Activated CD4-positive, alpha-beta T cell treated with anti-CD3 and anti-CD28 coated beads, Interleukin-2, amount 10 ng/mL, durations not matched to agents 24 days and 14 days (primary cell): ENCODE measurements at regions of chr5 and their contacts with region 1.

Region 1: GRCh38 chr5:179732417-179732917 is at the start of gene MAML1:
- DNase-seq: peak; percentile 100
- H3K4me3 Mint-ChIP-seq: peak within 1 kb of the TSS; percentile 96
- H3K27ac Mint-ChIP-seq: peak within 1 kb of the TSS; percentile 91
- H3K4me1 Mint-ChIP-seq: peaks cover 31% of the 10 kb centered on the region
- H3K27me3 Mint-ChIP-seq: no peaks in the 10 kb centered on the region
- total RNA-seq, gene MAML1: 34.6 and 37.3 TPM in 2 replicates

Region 2: GRCh38 chr5:178404987-178405386 is 1327.5 kb before region 1 on chr5:
- intact Hi-C with region 1: no loop called
- DNase-seq: no peak
- H3K4me3 Mint-ChIP-seq: no peak overlapping the region
- H3K27ac Mint-ChIP-seq: no peak overlapping the region
- H3K4me1 Mint-ChIP-seq: no peaks in the 10 kb centered on the region
- H3K27me3 Mint-ChIP-seq: no peaks in the 10 kb centered on the region

Region 3: DNA sequence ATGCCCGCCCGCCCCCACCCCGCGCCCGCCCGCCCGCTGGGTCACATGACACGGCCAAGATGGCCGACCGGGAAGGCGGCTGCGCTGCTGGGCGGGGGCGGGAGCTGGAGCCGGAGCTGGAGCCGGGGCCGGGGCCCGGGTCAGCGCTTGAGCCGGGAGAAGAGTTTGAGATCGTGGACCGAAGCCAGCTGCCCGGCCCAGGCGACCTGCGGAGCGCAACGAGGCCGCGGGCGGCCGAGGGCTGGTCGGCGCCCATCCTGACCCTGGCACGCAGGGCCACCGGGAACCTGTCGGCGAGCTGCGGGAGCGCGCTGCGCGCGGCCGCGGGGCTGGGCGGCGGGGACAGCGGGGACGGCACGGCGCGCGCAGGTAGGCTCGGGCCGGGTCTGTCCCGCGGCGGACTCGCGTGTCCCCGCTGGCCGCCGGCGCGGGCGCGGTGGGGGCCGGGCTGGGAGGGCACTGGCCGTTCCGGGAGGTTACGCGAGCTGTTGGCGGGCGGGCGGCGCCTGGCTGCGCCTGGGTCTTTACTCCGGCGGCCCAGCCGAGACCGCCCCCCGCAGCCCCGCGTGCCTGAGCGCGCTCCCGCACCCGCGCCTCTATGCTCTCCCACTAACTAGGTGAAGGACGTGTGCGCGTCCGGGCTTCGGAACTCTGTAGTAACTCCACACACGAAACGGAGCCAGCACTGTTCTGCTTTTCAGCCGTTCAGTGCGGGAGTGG is 181.8 kb before region 1 on chr5 and contains the start of gene RUFY1:
- intact Hi-C with region 1: loop called (anchors 2 kb)
- DNase-seq: peak; percentile 96
- H3K4me3 Mint-ChIP-seq: peak within 1 kb of the TSS; percentile 97
- H3K27ac Mint-ChIP-seq: peak within 1 kb of the TSS; percentile 99
- H3K4me1 Mint-ChIP-seq: peaks cover 23% of the 10 kb centered on the region
- H3K27me3 Mint-ChIP-seq: peaks cover 2% of the 10 kb centered on the region
- total RNA-seq, gene RUFY1: 38.8 and 40.6 TPM in 2 replicates

Region 4: GRCh38 chr5:179608131-179608581 is 124.3 kb before region 1 on chr5:
- intact Hi-C with region 1: no loop called
- DNase-seq: peak; percentile 91
- H3K4me3 Mint-ChIP-seq: peak overlapping the region; percentile 30
- H3K27ac Mint-ChIP-seq: peak overlapping the region; percentile 77
- H3K4me1 Mint-ChIP-seq: peaks cover 39% of the 10 kb centered on the region
- H3K27me3 Mint-ChIP-seq: no peaks in the 10 kb centered on the region

Region 5: GRCh38 chr5:179678223-179679013 is 54.0 kb before region 1 on chr5:
- intact Hi-C with region 1: loop called (anchors 1 kb)
- DNase-seq: peak; percentile 98
- H3K4me3 Mint-ChIP-seq: peak overlapping the region; percentile 100
- H3K27ac Mint-ChIP-seq: peak overlapping the region; percentile 99
- H3K4me1 Mint-ChIP-seq: peaks cover 31% of the 10 kb centered on the region
- H3K27me3 Mint-ChIP-seq: no peaks in the 10 kb centered on the region

Region 6: GRCh38 chr5:179697993-179698934 is 34.2 kb before region 1 on chr5:
- intact Hi-C with region 1: loop called (anchors 1 kb)
- DNase-seq: peak; percentile 100
- H3K4me3 Mint-ChIP-seq: peak overlapping the region; percentile 89
- H3K27ac Mint-ChIP-seq: peak overlapping the region; percentile 99
- H3K4me1 Mint-ChIP-seq: peaks cover 27% of the 10 kb centered on the region
- H3K27me3 Mint-ChIP-seq: no peaks in the 10 kb centered on the region

Region 7: GRCh38 chr5:179763215-179763945 is 30.9 kb after region 1 on chr5:
- intact Hi-C with region 1: loop called (anchors 2 kb)
- DNase-seq: peak; percentile 83
- H3K4me3 Mint-ChIP-seq: no peak overlapping the region
- H3K27ac Mint-ChIP-seq: no peak overlapping the region
- H3K4me1 Mint-ChIP-seq: peaks cover 47% of the 10 kb centered on the region
- H3K27me3 Mint-ChIP-seq: no peaks in the 10 kb centered on the region

Region 8: DNA sequence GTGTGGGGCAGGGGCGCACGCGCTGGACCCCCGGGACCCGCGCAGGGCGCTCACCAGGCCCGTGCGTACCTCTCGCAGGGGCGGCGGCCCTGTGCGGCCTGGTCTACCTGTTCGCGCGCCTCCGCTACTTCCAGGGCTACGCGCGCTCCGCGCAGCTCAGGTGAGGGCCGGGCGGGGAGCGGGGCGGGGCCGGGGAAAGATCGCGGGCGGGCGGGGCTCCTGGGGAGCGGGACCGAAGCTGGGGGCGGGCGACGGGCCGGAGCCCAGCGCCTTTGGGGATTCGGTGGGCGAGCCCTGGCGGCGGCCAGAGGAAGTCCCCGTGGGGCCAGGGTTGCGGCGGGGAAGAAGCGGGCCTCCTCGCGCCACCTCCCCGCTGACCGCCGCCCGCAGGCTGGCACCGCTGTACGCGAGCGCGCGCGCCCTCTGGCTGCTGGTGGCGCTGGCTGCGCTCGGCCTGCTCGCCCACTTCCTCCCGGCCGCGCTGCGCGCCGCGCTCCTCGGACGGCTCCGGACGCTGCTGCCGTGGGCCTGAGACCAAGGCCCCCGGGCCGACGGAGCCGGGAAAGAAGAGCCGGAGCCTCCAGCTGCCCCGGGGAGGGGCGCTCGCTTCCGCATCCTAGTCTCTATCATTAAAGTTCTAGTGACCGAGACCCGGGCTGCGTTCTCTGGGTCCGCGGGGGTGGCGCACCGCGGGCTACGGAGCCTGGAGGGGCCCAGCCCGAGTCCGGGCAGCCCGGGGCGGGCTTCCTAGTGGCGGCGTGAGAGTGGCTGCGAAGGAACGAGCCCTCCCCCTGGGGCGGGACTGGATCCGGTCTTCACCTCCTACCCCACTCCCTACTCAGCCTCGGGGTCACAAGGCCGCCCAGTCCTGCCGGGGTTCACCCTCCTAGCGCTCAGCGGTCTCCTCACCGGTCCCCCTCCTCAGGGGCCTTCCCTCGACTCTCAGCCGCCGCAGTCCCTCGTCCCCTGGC is 63.7 kb after region 1 on chr5:
- intact Hi-C with region 1: loop called (anchors 2 kb)
- DNase-seq: peak; percentile 92
- H3K4me3 Mint-ChIP-seq: peak overlapping the region; percentile 73
- H3K27ac Mint-ChIP-seq: peak overlapping the region; percentile 71
- H3K4me1 Mint-ChIP-seq: peaks cover 14% of the 10 kb centered on the region
- H3K27me3 Mint-ChIP-seq: no peaks in the 10 kb centered on the region

Region 9: DNA sequence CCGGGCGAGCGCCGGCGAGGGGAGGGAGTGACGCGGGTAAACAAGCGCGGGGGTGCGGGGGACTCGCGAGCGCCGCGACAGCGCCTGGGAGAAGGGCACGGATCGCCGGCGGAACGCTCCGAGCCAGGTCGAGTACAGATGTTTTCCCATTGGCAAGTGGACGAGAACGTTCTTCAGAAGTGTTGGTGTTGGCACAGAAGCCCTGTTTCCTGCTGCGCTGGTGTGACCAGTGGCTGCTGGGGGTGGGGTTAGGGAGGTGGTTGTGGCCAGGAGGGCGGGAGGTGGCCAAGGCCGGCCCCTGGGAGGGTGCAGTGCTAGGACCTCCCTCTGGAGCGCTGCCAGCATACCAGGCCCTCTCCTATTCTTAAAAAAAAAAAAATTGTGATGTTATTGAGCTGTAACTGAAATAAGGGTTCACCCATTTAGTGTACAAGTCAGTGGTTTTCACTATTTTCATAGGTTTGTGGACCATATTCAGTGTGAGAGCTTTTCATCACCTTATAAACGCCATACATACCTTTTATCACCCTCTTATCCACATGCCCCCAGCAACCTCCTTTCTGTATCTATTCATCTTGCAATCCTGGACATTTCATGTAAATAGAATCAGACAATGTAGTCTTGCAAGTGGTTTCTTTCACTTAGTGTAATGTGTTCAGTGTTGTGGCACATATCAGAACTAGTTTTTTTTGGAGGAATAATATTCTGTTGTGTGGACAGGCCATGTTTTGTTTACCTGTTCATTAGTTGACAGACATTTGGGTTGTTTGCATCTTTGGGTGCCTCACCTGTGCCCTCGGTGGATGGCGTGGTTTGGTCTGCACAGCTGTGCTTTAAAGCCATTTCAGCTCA is 89.3 kb after region 1 on chr5:
- intact Hi-C with region 1: loop called (anchors 1 kb)
- DNase-seq: peak; percentile 96
- H3K4me3 Mint-ChIP-seq: peak overlapping the region; percentile 96
- H3K27ac Mint-ChIP-seq: peak overlapping the region; percentile 91
- H3K4me1 Mint-ChIP-seq: peaks cover 35% of the 10 kb centered on the region
- H3K27me3 Mint-ChIP-seq: no peaks in the 10 kb centered on the region

Region 10: GRCh38 chr5:180575571-180575970 is 843.1 kb after region 1 on chr5:
- intact Hi-C with region 1: no loop called
- DNase-seq: no peak
- H3K4me3 Mint-ChIP-seq: no peak overlapping the region
- H3K27ac Mint-ChIP-seq: peak overlapping the region; percentile 59
- H3K4me1 Mint-ChIP-seq: peaks cover 6% of the 10 kb centered on the region
- H3K27me3 Mint-ChIP-seq: no peaks in the 10 kb centered on the region